Right cardiac atrium (tissue), 5 donors: ENCODE measurements at regions of chr11 and their contacts with region 1.

Region 1: DNA sequence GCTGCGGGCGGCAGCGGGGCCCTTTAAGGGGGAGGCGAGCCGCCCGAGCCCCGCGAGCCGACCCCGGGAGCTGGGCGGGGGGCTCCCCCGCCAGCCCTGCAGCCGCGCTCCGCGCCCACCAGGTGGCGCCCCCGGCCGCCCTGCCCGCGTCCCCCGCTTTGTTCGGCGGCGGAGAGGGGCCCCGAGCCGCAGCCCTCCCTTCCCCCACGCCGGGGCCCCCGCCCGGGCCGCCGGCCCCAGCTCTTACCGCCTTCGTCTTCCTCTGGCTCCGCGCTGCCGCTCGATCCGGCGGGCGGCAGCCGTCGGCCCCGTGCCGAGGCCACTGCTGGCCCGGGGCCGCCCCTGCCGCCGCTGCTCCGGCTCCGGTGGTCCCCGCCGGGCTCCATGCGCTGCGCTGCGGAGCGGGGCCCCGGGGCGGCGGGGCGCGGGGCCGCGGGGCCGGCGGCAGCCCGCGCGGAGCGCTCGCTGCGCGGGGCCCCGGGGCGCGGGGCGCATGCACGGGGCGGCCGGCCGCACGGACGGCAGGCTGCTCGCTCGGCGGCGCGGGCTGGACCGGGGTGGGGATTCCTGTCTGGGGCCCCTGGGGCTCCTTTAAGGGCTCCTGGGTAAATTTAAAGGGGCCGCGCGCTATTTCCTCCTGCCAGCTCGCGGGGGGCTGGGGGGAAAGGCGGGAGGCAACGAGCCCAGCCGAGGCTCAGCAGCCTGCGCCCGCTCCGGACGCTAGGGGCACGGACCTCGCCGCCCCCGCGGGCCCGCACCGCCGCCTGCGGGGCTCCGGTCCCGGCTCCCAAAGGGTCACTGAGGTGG is at the start of gene ZFTA:
- DNase-seq: peak; percentile 75 to 88 (median 86)
- ATAC-seq: peak; percentile 17 to 32
- H3K4me3 ChIP-seq: peak within 1 kb of the TSS; percentile 99
- H3K27ac ChIP-seq: peak within 1 kb of the TSS; percentile 79
- H3K4me1 ChIP-seq: peaks cover 4% of the 10 kb centered on the region
- H3K27me3 ChIP-seq: no peaks in the 10 kb centered on the region
- total RNA-seq, gene ZFTA: 13.9 to 17.7 (median 15.4) TPM

Region 2: GRCh38 chr11:63813035-63813562 is 44.7 kb after region 1 on chr11 and contains the start of gene SPINDOC:
- intact Hi-C with region 1: loop called in 1 of 4 experiments (anchors 5 kb)
- DNase-seq: peak; percentile 83 to 94 (median 93)
- ATAC-seq: peak; percentile 94 to 95
- H3K4me3 ChIP-seq: peak within 1 kb of the TSS; percentile 89
- H3K27ac ChIP-seq: peak within 1 kb of the TSS; percentile 51
- H3K4me1 ChIP-seq: no peaks in the 10 kb centered on the region
- H3K27me3 ChIP-seq: no peaks in the 10 kb centered on the region
- total RNA-seq, gene SPINDOC: 12.8 to 18.8 (median 17.4) TPM